Left ventricle myocardium superior (tissue), 1 donor: ENCODE measurements at regions of chr10 and their contacts with region 1.

Region 1: GRCh38 chr10:124530215-124530665 is 68.6 kb downstream of the LHPP start:
- DNase-seq: peak; percentile 93
- ATAC-seq: peak; percentile 83

Region 2: DNA sequence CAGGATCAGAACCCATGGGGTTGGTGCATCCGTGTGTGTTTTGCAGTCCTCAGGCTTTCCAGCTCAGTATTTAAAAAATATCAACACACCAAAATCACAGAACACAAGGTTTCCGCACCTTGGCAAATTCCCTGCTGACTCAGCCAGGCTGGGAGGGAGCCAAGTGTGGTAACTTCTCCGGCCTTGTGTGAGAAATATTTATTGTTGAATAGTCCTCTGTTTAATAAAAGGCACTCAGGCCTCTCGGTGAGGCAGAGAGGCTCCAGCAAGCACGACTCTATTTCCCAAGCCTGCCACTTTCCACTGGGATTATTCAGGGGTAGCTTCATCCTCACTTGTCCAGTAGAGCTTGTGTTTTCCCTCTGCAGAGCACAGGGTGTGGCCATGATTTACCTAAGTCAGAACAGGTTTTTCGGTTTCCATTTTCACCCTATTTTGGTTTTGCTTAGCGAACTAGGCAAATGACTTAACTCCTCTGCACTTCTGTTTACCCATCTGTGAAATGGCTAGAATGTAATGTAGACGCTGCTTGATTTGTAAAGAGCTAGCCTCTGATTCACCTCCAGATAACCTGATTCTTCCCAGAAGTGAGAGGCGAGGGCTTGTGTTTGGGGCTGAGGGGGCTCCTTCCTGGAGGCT is 423.9 kb before region 1 on chr10:
- intact Hi-C with region 1: no loop called
- DNase-seq: no peak
- ATAC-seq: peak; percentile 33

Region 3: GRCh38 chr10:124827474-124827873 is 297.2 kb after region 1 on chr10:
- intact Hi-C with region 1: loop called (anchors 10 kb)
- DNase-seq: no peak
- ATAC-seq: no peak